ENCODE measurements at regions of chr9 and their contacts with region 1.

Region 1: GRCh38 chr9:89781838-89782517 is 177.2 kb downstream of the GADD45G start:
- DNase-seq: peak; percentile 33
- ATAC-seq: peak; percentile 99
- H3K4me3 Mint-ChIP-seq: peak overlapping the region; percentile 32
- H3K27ac Mint-ChIP-seq: peak overlapping the region; percentile 54
- H3K4me1 Mint-ChIP-seq: peaks cover 23% of the 10 kb centered on the region
- H3K27me3 Mint-ChIP-seq: no peaks in the 10 kb centered on the region
- CTCF ChIP-seq: no peak

Region 2: DNA sequence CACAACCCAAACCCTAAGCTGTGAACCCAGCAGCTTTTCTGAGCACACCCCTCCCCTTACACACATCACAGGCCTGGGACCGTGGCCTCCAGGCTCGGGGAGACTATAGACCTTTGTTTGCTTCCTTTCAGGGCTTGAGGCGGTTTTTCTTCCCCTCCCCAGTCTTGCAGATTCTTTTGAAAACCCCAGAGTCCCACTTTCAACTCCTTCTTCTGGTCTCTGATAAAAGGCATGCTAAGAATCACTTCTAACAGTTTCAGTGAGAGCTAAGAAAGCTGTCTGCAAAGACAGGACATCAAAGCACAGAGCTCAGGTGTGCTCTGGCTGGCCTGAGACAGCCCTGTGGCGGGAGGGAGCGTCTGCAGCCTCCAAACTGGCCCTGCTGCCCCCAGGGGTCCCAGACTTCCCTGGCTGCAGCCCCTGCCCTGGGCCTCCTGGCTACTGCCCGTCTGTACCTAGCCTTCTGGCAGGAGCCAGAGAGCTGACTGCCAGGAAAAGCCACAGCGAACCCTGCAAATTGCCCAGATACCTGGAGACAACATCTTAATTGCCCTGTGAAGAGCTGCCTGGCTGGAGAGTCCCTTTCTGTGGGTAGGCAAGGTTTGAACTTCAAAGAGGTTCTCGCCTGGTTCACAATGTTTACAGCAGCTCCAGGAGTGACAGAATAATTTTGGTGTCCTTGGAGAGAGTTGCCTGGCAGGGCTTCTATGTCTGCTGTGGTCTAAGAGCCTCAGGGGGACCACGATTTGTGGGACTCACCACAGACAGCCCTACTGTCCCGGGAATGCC is 38.2 kb before region 1 on chr9:
- CTCF ChIA-PET with region 1: no interaction called
- POLR2A ChIA-PET with region 1: no interaction called
- intact Hi-C with region 1: loop called (anchors 5 kb)
- DNase-seq: no peak
- ATAC-seq: peak; percentile 15
- H3K4me3 Mint-ChIP-seq: no peak overlapping the region
- H3K27ac Mint-ChIP-seq: peak overlapping the region; percentile 65
- H3K4me1 Mint-ChIP-seq: peaks cover 60% of the 10 kb centered on the region
- H3K27me3 Mint-ChIP-seq: no peaks in the 10 kb centered on the region
- CTCF ChIP-seq: no peak

Region 3: GRCh38 chr9:89770531-89771174 is 11.3 kb before region 1 on chr9:
- CTCF ChIA-PET with region 1: no interaction called
- POLR2A ChIA-PET with region 1: interaction called, 3 read pairs
- intact Hi-C with region 1: loop called (anchors 1 kb)
- DNase-seq: no peak
- ATAC-seq: peak; percentile 40
- H3K4me3 Mint-ChIP-seq: no peak overlapping the region
- H3K27ac Mint-ChIP-seq: no peak overlapping the region
- H3K4me1 Mint-ChIP-seq: peaks cover 28% of the 10 kb centered on the region
- H3K27me3 Mint-ChIP-seq: no peaks in the 10 kb centered on the region
- CTCF ChIP-seq: no peak

Measured in activated B cell treated with CpG ODN at 0.5 μM for 24 hours (primary cell).